ENCODE measurements at regions of chr11 and their contacts with region 1.

Region 1: GRCh38 chr11:112588252-112588694 is 327.6 kb upstream of the PLET1 start:
- DNase-seq: peak; percentile 69
- H3K4me3 ChIP-seq: no peak overlapping the region
- H3K27ac ChIP-seq: peak overlapping the region in 1 of 2 experiments; percentile 62; a peak in 2 of 4 replicates
- H3K4me1 ChIP-seq: peaks cover 7% of the 10 kb centered on the region in 2 experiments; a peak in 3 of 4 replicates
- H3K27me3 ChIP-seq: no peaks in the 10 kb centered on the region
- CTCF ChIP-seq: peak; percentile 85
- EP300 ChIP-seq: no peak
- RAD21 ChIP-seq: peak; percentile 97

Region 2: GRCh38 chr11:111730871-111731591 is 857.2 kb before region 1 on chr11:
- CTCF ChIA-PET with region 1: no interaction called
- POLR2A ChIA-PET with region 1: no interaction called
- DNase-seq: peak; percentile 49
- H3K4me3 ChIP-seq: no peak overlapping the region
- H3K27ac ChIP-seq: no peak overlapping the region; a peak in 1 of 4 replicates
- H3K4me1 ChIP-seq: peaks cover 35 to 62% of the 10 kb centered on the region in 2 experiments
- H3K27me3 ChIP-seq: no peaks in the 10 kb centered on the region
- CTCF ChIP-seq: no peak
- EP300 ChIP-seq: no peak
- RAD21 ChIP-seq: no peak

Region 3: DNA sequence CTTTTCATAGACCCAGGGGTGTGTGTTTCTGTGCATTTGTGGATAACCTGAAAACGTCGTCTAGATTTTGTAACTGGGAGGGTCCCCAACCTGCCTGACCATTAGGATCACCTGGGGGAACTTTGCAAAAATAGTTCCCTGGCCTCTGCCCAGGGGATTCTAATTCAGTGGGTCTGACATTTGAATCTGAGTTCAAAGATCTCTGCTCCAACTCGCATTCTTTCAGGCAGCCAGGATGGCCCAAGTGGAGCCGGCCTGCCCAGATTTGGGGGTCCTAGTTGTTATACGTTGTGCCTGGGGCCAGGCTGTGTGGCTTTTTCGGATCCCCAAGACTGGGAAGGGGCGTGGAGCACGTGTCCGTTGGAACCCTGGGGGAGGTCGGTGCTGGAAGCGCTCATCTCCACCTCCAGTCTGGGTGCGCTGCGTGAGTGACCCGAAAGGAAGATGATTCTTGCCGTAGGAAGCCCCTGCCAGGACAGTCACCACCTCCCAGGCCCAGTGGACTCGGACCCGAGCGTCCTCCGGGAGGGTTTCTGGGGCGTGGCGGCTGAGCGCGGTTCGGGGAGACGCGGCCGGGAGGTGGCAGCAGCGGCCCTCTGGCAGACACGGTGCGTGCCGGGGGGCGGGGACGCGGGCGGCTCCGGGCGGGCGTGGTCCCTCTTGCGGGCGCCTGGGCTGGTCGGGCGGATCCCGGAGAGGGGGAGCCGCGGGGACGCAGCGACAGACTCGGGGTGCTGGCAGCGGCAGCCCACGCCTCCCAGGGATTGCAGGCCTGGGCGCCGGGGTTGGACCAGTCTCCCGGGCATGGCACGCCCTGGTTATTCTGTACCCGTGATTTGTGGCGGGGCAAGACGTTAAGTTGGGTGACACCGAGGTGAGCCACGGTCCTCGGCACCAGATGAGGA is 298.4 kb before region 1 on chr11:
- CTCF ChIA-PET with region 1: interaction called, 15 read pairs
- POLR2A ChIA-PET with region 1: no interaction called
- DNase-seq: peak; percentile 97
- H3K4me3 ChIP-seq: peak overlapping the region; percentile 72 to 73
- H3K27ac ChIP-seq: peak overlapping the region in 1 of 2 experiments; percentile 4; a peak in 1 of 4 replicates
- H3K4me1 ChIP-seq: peaks cover 9 to 30% of the 10 kb centered on the region in 2 experiments
- H3K27me3 ChIP-seq: no peaks in the 10 kb centered on the region
- CTCF ChIP-seq: peak; percentile 81
- EP300 ChIP-seq: no peak; a peak in 1 of 4 replicates
- RAD21 ChIP-seq: peak; percentile 83

Region 4: GRCh38 chr11:112665291-112665690 is 77.0 kb after region 1 on chr11:
- CTCF ChIA-PET with region 1: no interaction called
- POLR2A ChIA-PET with region 1: no interaction called
- DNase-seq: no peak
- H3K4me3 ChIP-seq: no peak overlapping the region
- H3K27ac ChIP-seq: no peak overlapping the region
- H3K4me1 ChIP-seq: peaks cover 0 to 4% of the 10 kb centered on the region in 2 experiments; a peak in 1 of 4 replicates
- H3K27me3 ChIP-seq: no peaks in the 10 kb centered on the region
- CTCF ChIP-seq: no peak
- EP300 ChIP-seq: no peak
- RAD21 ChIP-seq: no peak

Region 5: DNA sequence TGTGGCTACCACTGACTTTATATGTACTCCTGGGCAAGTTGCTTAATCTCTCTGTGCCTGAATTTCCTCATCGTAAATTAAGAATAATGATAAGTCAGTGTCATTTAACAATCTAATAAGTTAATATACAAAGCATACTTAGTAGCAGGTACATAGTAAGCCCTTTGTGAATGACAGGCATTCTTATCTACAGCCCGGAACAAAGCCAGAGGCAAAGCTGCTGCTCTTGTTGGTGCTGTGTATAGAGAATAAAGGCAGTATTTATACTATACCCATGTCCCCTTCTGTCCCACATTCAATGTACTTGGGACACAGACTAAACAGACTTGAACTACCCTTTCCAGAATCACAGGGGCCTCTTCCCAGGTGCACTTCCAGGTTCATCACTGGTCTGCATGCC is 143.3 kb after region 1 on chr11:
- CTCF ChIA-PET with region 1: no interaction called
- POLR2A ChIA-PET with region 1: no interaction called
- DNase-seq: no peak
- H3K4me3 ChIP-seq: no peak overlapping the region
- H3K27ac ChIP-seq: no peak overlapping the region
- H3K4me1 ChIP-seq: peaks cover 0 to 3% of the 10 kb centered on the region in 2 experiments; a peak in 1 of 4 replicates
- H3K27me3 ChIP-seq: no peaks in the 10 kb centered on the region
- CTCF ChIP-seq: no peak
- EP300 ChIP-seq: no peak
- RAD21 ChIP-seq: no peak

Region 6: GRCh38 chr11:112795142-112795815 is 207.0 kb after region 1 on chr11:
- CTCF ChIA-PET with region 1: interaction called, 20 read pairs
- POLR2A ChIA-PET with region 1: interaction called, 3 read pairs
- DNase-seq: peak; percentile 56
- H3K4me3 ChIP-seq: no peak overlapping the region; a peak in 1 of 4 replicates
- H3K27ac ChIP-seq: no peak overlapping the region
- H3K4me1 ChIP-seq: peaks cover 0 to 22% of the 10 kb centered on the region in 2 experiments; a peak in 1 of 4 replicates
- H3K27me3 ChIP-seq: no peaks in the 10 kb centered on the region
- CTCF ChIP-seq: peak; percentile 78
- EP300 ChIP-seq: no peak
- RAD21 ChIP-seq: peak; percentile 71

Region 7: DNA sequence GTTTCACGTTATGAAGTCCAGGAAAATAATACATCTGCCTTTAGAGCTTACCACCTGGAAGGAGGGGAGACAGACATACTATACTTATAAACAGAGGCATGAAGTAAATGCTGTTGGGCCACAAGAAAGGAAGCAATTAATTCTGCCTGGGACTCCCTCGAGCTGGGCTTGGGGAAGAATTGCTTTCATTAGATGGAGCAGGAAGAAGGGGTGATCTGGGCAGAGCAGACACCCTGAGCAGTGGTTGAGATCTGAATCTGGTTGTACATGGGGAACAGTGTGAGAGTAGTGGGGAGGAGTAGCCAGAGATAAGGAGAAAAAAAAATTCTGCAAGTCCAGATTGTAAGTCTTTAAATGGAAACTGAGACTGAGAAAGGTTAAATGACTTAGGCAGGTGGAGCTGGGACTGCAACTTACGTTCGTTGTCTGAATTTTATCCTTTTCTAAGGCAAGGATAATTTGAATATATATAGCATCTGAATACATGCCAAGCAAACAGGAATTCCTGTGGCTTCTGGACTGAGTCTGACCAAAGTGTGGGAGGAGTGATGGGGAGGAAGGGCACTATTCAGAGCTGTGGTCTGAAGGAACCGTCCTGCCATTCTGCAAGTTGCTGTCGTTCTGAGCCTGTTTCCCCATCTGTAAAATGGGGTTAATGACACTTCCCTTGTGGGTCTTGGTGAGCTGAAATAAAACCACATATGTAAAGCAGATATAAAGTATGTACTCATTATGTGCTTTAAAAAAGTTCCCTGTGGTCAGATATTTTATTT is 380.9 kb after region 1 on chr11:
- CTCF ChIA-PET with region 1: interaction called, 13 read pairs
- POLR2A ChIA-PET with region 1: no interaction called
- DNase-seq: peak; percentile 25
- H3K4me3 ChIP-seq: no peak overlapping the region
- H3K27ac ChIP-seq: peak overlapping the region in 1 of 2 experiments; percentile 83; a peak in 2 of 4 replicates
- H3K4me1 ChIP-seq: peaks cover 0 to 24% of the 10 kb centered on the region in 2 experiments; a peak in 2 of 4 replicates
- H3K27me3 ChIP-seq: no peaks in the 10 kb centered on the region
- CTCF ChIP-seq: no peak
- EP300 ChIP-seq: no peak
- RAD21 ChIP-seq: no peak

Region 8: DNA sequence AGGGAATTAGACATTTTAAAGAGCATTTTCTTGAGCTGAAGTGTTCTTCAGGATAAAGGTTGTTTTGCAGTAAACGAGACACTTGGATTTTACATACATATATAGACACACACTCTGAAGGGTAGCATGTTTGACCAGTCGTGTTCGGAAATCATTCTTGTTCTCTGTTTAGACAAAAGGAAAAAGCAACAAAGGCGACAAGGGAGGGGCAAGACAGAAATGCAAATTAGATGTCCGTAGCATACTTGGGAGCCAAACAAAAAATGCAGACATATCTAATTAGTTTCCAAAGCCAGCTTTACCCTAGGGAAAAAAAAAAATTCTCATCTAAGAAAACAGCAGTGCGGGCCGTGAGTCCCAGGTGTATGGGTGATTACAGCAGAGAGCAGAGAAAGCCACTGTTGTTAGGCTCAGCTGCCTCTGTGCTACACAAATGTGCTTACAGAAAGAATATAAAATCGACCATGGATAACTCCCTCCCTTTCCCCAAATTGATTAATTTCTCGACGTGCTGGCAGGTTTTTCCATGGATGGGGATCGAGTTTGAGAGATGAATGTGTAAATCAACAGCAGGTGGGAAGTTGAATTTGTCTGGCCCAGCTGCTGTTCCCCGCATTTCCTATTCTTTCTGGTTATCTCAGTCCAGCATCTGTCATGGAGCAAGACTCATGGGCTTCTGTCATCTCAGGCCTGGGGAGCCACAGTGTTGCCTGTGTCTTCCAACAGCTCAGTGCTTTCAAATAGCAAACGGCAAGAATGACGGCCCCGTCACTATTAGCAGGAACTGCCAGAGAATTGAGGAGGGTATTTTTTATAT is 549.6 kb after region 1 on chr11:
- CTCF ChIA-PET with region 1: interaction called, 16 read pairs
- POLR2A ChIA-PET with region 1: no interaction called
- DNase-seq: peak; percentile 56
- H3K4me3 ChIP-seq: no peak overlapping the region
- H3K27ac ChIP-seq: peak overlapping the region in 1 of 2 experiments; percentile 95; a peak in 2 of 4 replicates
- H3K4me1 ChIP-seq: peaks cover 0 to 51% of the 10 kb centered on the region in 2 experiments; a peak in 2 of 4 replicates
- H3K27me3 ChIP-seq: no peaks in the 10 kb centered on the region
- CTCF ChIP-seq: no peak
- EP300 ChIP-seq: peak in 1 of 2 experiments; percentile 87; a peak in 2 of 4 replicates
- RAD21 ChIP-seq: peak; percentile 38

Region 9: GRCh38 chr11:113281052-113281725 is 692.9 kb after region 1 on chr11:
- CTCF ChIA-PET with region 1: interaction called, 14 read pairs
- POLR2A ChIA-PET with region 1: no interaction called
- DNase-seq: no peak
- H3K4me3 ChIP-seq: no peak overlapping the region
- H3K27ac ChIP-seq: no peak overlapping the region
- H3K4me1 ChIP-seq: no peaks in the 10 kb centered on the region
- H3K27me3 ChIP-seq: no peaks in the 10 kb centered on the region
- CTCF ChIP-seq: no peak
- EP300 ChIP-seq: no peak
- RAD21 ChIP-seq: no peak

Measured in SK-N-SH (cell line).